ENCODE measurements at regions of chr2 and their contacts with region 1.

Region 1: GRCh38 chr2:239724194-239724849 is 300.8 kb downstream of the NDUFA10 start:
- DNase-seq: no peak
- ATAC-seq: no peak
- H3K4me3 ChIP-seq: no peak overlapping the region
- H3K4me3 Mint-ChIP-seq: no peak overlapping the region
- H3K27ac ChIP-seq: no peak overlapping the region
- H3K27ac Mint-ChIP-seq: no peak overlapping the region
- H3K4me1 ChIP-seq: no peaks in the 10 kb centered on the region
- H3K4me1 Mint-ChIP-seq: no peaks in the 10 kb centered on the region
- H3K27me3 ChIP-seq: no peaks in the 10 kb centered on the region
- H3K27me3 Mint-ChIP-seq: no peaks in the 10 kb centered on the region
- CTCF ChIP-seq: no peak

Region 2: DNA sequence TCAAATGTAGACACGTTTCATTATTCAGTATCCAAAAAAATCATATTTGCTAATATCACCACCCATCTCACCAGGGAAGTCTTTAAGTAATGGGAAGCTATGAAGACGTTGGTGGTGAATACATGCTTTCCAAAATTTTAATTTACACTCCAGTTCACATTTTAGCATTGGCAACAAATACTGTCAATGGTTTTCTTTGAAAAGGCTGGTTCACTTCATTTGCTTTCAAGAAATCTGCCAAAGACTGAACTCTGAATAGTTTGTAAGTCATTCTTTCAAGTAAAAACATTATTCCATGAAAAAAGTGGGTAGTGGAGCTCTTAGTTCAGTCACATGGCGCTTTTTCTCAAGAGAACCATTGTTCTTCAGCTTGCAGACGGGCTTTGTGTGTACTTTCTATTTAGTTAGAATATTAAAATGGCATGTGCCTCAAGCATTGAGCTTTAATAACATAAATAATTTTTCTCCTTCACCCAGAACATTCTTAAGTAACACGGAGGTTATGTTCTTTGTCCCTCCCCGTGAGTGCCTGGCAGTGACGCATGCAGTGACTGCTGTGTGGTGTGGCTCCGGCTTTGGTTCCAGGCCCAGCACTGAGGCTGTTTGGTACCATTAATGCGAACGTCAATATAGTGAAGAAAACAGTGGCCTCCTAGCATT is 23.5 kb before region 1 on chr2:
- CTCF ChIA-PET with region 1: no interaction called
- POLR2A ChIA-PET with region 1: no interaction called
- intact Hi-C with region 1: no loop called
- DNase-seq: peak in 1 of 14 experiments; percentile 11
- ATAC-seq: no peak
- H3K4me3 ChIP-seq: no peak overlapping the region
- H3K4me3 Mint-ChIP-seq: no peak overlapping the region
- H3K27ac ChIP-seq: no peak overlapping the region
- H3K27ac Mint-ChIP-seq: no peak overlapping the region
- H3K4me1 ChIP-seq: no peaks in the 10 kb centered on the region
- H3K4me1 Mint-ChIP-seq: no peaks in the 10 kb centered on the region
- H3K27me3 ChIP-seq: peaks cover 4 to 11% of the 10 kb centered on the region in 2 experiments
- H3K27me3 Mint-ChIP-seq: peaks cover 7% of the 10 kb centered on the region
- CTCF ChIP-seq: no peak

Region 3: DNA sequence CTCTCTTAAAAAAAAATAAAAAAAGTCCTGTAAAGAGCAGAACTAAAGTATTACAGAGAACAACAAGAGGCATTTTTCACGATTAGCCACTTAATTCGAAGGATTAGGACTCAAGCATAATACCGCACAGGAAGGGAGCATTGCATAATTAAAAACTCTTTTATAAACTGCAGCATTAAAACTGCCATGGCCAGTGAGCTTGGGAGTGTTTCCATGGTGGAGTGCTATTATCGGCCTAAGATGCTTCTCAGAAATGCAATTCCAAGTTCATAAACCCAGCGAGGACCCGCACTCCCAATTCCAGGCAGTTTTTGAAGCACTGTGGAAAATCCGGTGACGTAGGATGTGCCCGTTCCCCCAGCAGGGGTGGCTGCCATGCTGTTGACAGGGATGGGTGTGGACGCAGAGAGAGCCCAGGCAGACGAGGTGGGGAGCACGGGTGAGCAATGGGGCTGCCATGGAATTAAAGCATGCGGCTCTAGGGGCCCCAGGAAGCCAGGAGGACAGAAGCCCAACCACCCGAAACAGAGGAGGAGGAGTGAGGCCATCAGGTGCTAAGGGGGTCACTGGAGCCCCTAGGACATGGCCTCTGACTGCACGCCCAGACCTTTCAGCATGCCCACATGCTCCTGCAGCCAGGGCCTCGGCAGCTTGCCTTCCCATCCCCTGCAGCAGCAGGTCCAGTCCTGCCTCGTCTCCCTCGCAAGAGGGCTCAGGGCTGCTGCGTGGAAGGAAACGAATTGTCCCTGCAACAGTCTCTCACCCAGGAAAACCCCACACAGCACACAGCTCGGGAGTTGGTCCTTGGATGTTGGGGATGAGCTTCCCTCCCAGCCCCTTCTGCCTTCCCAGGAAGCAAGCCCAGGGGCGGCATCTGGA is 67.4 kb after region 1 on chr2:
- CTCF ChIA-PET with region 1: no interaction called
- POLR2A ChIA-PET with region 1: no interaction called
- intact Hi-C with region 1: no loop called
- DNase-seq: peak in 1 of 14 experiments; percentile 7
- ATAC-seq: no peak
- H3K4me3 ChIP-seq: no peak overlapping the region
- H3K4me3 Mint-ChIP-seq: no peak overlapping the region
- H3K27ac ChIP-seq: no peak overlapping the region
- H3K27ac Mint-ChIP-seq: no peak overlapping the region
- H3K4me1 ChIP-seq: no peaks in the 10 kb centered on the region
- H3K4me1 Mint-ChIP-seq: no peaks in the 10 kb centered on the region
- H3K27me3 ChIP-seq: no peaks in the 10 kb centered on the region
- H3K27me3 Mint-ChIP-seq: no peaks in the 10 kb centered on the region
- CTCF ChIP-seq: no peak

Region 4: GRCh38 chr2:240189686-240190085 is 465.4 kb after region 1 on chr2:
- CTCF ChIA-PET with region 1: no interaction called
- POLR2A ChIA-PET with region 1: no interaction called
- intact Hi-C with region 1: no loop called
- DNase-seq: no peak
- ATAC-seq: no peak
- H3K4me3 ChIP-seq: no peak overlapping the region
- H3K4me3 Mint-ChIP-seq: no peak overlapping the region
- H3K27ac ChIP-seq: no peak overlapping the region
- H3K27ac Mint-ChIP-seq: no peak overlapping the region
- H3K4me1 ChIP-seq: no peaks in the 10 kb centered on the region
- H3K4me1 Mint-ChIP-seq: no peaks in the 10 kb centered on the region
- H3K27me3 ChIP-seq: peaks cover 4 to 12% of the 10 kb centered on the region in 2 experiments
- H3K27me3 Mint-ChIP-seq: peaks cover 32% of the 10 kb centered on the region
- CTCF ChIP-seq: no peak

Region 5: GRCh38 chr2:240287496-240288086 is 563.3 kb after region 1 on chr2:
- CTCF ChIA-PET with region 1: no interaction called
- POLR2A ChIA-PET with region 1: no interaction called
- intact Hi-C with region 1: loop called in 1 of 2 experiments (anchors 5 kb)
- DNase-seq: no peak
- ATAC-seq: no peak
- H3K4me3 ChIP-seq: no peak overlapping the region
- H3K4me3 Mint-ChIP-seq: no peak overlapping the region
- H3K27ac ChIP-seq: no peak overlapping the region
- H3K27ac Mint-ChIP-seq: no peak overlapping the region
- H3K4me1 ChIP-seq: no peaks in the 10 kb centered on the region
- H3K4me1 Mint-ChIP-seq: no peaks in the 10 kb centered on the region
- H3K27me3 ChIP-seq: no peaks in the 10 kb centered on the region
- H3K27me3 Mint-ChIP-seq: no peaks in the 10 kb centered on the region
- CTCF ChIP-seq: no peak